ENCODE measurements at regions of chr1 and their contacts with region 1.

Region 1: GRCh38 chr1:169485544-169486278 is at the start of gene SLC19A2:
- DNase-seq: peak; percentile 99
- H3K4me3 ChIP-seq: peak within 1 kb of the TSS; percentile 82
- H3K27ac ChIP-seq: peak within 1 kb of the TSS; percentile 78
- H3K4me1 ChIP-seq: peaks cover 23% of the 10 kb centered on the region
- H3K27me3 ChIP-seq: no peaks in the 10 kb centered on the region
- CTCF ChIP-seq: peak; percentile 37
- total RNA-seq, gene SLC19A2: 9.9 TPM in 2 replicates

Region 2: DNA sequence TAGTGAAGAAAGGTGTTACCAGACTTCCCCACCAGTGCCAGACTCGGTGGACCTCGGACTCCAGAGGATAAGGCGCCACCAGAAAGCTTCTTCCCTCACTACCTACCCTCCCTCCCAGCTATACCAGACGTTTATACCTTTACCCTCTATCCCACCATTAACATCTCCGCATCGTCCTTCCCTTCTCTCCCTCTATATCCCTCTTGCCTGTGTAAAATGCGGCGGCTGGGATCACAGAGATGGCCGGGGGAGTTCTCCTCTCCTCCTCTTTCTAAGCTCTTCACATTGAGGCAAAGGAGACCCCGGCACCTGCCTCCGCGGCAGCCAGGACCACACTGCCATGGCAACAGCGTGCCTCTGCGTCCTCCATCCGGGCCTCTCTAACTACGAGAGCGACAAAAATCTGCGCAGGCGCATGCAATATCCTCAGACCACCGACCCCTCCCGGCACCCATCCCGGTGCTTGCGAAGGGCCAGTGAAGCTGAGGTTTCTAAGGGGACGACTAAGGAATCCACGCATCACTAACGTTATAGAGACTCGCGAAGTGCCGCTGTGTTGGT is 58.5 kb before region 1 on chr1 and contains the start of gene CCDC181:
- CTCF ChIA-PET with region 1: no interaction called
- POLR2A ChIA-PET with region 1: no interaction called
- intact Hi-C with region 1: loop called (anchors 2 kb)
- DNase-seq: peak; percentile 90
- H3K4me3 ChIP-seq: peak within 1 kb of the TSS; percentile 52
- H3K27ac ChIP-seq: no peak within 1 kb of the TSS
- H3K4me1 ChIP-seq: no peaks in the 10 kb centered on the region
- H3K27me3 ChIP-seq: peaks cover 8% of the 10 kb centered on the region
- CTCF ChIP-seq: no peak
- total RNA-seq, gene CCDC181: 5.7 and 6.7 TPM in 2 replicates